Sigmoid colon (tissue), 7 donors: ENCODE measurements at regions of chr22 and their contacts with region 1.

Region 1: GRCh38 chr22:50620593-50621355 is 7.2 kb downstream of the ARSA start:
- DNase-seq: peak; percentile 80
- H3K4me3 ChIP-seq: peak overlapping the region in 2 of 4 donors; percentile 26 to 28
- H3K27ac ChIP-seq: no peak overlapping the region
- H3K4me1 ChIP-seq: peaks cover 0 to 16% (median 8%) of the 10 kb centered on the region in 4 donors
- H3K27me3 ChIP-seq: peaks cover 0 to 39% (median 20%) of the 10 kb centered on the region in 3 donors
- CTCF ChIP-seq: peak in 1 of 4 experiments; percentile 44
- EP300 ChIP-seq: no peak
- POLR2A ChIP-seq: no peak

Region 2: DNA sequence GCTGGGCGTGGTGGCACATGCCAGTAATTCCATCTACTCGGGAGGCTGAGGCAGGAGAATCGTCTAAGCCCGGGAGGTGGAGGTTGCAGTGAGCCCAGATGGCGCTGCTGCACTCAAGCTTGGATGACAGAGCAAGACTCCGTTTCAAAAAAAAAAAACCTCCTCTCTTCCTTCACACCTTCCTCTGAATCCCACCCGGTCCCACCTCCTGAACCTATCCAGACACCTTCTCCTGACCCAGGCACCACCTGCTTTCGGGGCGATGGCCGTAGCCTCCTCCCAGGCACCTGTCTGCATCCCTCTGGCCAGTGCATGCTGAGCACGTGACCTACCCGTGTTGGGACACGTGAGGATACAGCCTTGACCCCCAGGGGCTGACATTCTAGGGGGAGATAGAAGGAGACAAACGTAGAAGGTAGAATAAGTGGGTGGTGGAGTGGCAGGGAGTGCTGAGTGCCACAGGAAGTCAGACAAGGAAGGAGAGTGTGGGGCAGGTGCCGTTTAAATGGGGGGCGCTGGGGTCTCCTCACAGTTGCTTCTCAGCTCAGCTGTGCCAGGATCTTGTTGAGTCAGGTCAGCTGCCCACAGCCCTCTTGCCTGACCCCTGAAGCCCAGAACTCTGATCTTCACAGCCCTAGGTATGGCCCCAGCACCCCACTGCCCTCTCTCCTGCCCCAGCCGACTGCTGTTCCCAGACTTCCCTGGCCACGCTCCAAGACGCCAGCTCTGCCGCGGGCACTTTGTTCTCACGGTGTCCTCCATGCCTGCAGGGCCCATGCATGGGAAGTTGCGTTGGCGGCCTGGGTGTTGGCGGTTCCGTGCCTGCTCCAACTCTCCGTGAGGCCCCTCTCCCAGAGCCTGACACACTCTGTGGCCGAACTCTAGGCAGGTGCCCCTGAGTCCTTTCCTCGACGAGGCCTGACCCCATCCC is 135.3 kb before region 1 on chr22:
- intact Hi-C with region 1: no loop called
- DNase-seq: no peak
- H3K4me3 ChIP-seq: no peak overlapping the region
- H3K27ac ChIP-seq: no peak overlapping the region
- H3K4me1 ChIP-seq: peaks cover 0 to 16% (median 7%) of the 10 kb centered on the region in 4 donors
- H3K27me3 ChIP-seq: peaks cover 30 to 66% (median 44%) of the 10 kb centered on the region in 3 donors
- CTCF ChIP-seq: no peak
- EP300 ChIP-seq: no peak
- POLR2A ChIP-seq: no peak

Region 3: GRCh38 chr22:50544078-50544745 is 76.6 kb before region 1 on chr22:
- intact Hi-C with region 1: loop called (anchors 5 kb)
- DNase-seq: peak; percentile 81
- H3K4me3 ChIP-seq: peak overlapping the region in 3 of 4 donors; percentile 14 to 33 (median 30)
- H3K27ac ChIP-seq: peak overlapping the region in 2 of 4 donors; percentile 22 to 34
- H3K4me1 ChIP-seq: peaks cover 0 to 31% (median 23%) of the 10 kb centered on the region in 4 donors
- H3K27me3 ChIP-seq: peaks cover 21 to 61% (median 60%) of the 10 kb centered on the region in 3 donors
- CTCF ChIP-seq: peak in 2 of 4 experiments; percentile 22 to 38
- EP300 ChIP-seq: no peak
- POLR2A ChIP-seq: no peak

Region 4: DNA sequence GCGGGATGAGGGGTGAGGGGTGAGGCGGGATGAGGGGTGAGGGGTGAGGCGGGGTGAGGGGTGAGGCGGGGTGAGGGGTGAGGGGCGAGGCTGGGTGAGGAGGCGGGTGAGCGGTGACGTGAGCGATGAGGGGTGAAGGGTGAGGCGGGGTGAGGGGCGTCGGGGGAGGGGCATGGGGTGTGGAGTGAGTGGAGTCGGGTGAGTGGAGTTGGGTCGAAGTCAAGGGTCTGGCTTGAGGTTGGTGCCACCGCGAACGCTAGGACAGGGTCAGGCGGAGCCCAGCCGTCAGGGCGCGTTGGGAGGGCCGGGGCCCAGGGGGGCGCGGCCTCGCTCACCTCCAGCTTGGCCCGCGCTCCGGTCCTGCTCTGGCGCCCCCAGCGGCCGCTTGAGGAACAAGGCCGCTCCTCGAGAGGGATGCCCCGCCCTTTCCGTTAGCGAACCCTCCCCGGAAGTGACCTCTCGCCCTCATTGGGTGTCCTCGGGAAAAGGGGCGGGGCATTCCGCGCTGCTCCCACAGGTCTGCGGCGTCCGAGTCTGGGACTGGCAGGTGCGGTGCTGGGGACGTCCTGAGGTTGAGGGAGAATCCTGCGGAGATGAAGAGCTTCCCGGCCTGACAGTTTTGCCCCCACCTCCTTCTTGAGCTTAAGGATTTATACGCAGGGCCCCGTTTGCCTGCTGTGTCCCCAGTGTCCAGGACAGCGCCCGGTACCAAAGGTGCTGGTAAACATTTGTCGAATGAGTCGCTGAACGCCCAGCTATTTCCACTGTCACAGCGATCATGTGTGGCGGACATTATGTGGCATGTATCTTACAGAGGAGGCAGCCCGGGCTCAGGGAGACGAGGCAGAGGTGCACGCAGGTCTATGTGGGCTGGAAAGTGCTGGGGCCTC is 58.0 kb before region 1 on chr22 and contains the start of gene SYCE3:
- intact Hi-C with region 1: loop called (anchors 1 kb)
- DNase-seq: peak; percentile 98
- H3K4me3 ChIP-seq: peak within 1 kb of the TSS; percentile 29 to 63 (median 55)
- H3K27ac ChIP-seq: peak within 1 kb of the TSS in 3 of 4 donors; percentile 36 to 53 (median 40)
- H3K4me1 ChIP-seq: peaks cover 0 to 11% (median 8%) of the 10 kb centered on the region in 4 donors
- H3K27me3 ChIP-seq: no peaks in the 10 kb centered on the region
- CTCF ChIP-seq: peak; percentile 78 to 97 (median 90)
- EP300 ChIP-seq: no peak
- POLR2A ChIP-seq: peak in 1 of 2 donors; percentile 85
- total RNA-seq, gene SYCE3: not detected

Region 5: DNA sequence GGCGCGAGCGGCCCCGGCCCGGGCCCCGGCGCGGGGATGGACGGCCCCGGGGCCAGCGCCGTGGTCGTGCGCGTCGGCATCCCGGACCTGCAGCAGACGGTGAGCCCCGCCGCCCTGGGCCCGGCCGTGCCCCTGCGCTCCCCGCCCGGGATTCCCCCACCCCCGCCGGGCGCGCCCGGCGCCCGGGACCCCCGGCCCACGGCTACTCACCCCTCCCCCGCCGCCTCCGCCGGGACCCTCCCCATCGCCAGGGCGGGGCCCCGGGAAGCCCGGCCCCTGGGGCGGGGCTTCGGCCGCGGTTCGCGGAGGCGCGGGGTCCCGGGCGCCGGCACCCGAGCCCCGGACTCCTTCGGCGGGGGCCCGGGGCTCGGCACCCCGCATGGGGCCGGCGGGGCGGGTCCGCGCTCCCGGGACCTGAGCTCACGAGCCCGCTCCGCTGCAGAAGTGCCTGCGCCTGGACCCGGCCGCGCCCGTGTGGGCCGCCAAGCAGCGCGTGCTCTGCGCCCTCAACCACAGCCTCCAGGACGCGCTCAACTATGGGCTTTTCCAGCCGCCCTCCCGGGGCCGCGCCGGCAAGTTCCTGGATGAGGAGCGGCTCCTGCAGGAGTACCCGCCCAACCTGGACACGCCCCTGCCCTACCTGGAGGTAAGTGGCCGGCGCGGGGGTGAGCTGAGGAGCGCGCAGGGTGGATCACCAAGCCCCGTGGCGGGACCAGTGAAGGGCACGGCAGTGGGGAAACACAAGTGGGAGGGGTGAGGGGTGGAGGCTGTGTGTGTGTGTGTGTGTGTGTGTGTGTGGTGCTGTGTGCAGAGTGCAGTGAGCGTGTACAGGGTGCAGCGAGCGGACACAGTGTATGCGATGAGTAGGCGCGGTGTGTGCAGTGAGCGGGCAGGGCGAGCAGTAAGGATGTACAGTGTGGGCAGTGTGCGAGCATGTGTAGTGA is 54.1 kb after region 1 on chr22:
- intact Hi-C with region 1: no loop called
- DNase-seq: no peak
- H3K4me3 ChIP-seq: peak overlapping the region in 3 of 4 donors; percentile 28 to 44 (median 41)
- H3K27ac ChIP-seq: no peak overlapping the region
- H3K4me1 ChIP-seq: peaks cover 0 to 18% (median 15%) of the 10 kb centered on the region in 4 donors
- H3K27me3 ChIP-seq: peaks cover 22 to 62% (median 39%) of the 10 kb centered on the region in 3 donors
- CTCF ChIP-seq: no peak
- EP300 ChIP-seq: no peak
- POLR2A ChIP-seq: no peak